Posterior vena cava (tissue), 2 donors: ENCODE measurements at regions of chr7 and their contacts with region 1.

Region 1: DNA sequence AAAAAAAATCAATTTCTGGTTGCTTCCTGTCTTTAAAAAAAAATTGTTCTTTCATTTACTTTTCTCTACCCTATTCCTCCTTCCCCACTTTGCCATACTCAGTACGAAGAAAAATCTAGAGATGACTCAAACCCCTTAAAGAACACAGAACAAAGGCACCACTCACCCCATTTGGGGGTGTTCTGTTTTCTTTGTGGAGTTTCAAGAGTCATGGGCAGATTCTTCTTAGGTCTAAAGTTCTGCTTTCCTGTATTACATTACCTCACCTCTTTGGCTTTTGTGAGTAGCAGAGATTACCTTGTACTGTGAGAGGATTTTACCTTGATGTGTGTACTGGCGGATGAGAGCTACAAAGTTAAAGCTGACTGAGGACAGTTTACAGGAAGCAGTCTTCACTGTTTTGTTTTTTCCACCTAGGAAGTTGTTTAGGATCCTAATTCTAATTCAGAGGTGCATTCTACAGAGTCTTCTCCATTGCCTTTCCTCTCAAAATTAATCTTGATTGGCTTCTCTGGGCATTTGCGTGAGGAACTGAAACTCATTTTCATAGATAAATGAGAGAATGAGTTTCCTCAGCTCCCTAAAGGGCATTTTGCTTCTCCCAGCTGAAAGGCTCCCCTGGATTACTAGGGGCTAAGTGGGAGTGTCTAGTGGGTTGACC is 20.7 kb downstream of the AVL9 start:
- DNase-seq: no peak

Region 2: GRCh38 chr7:31134246-31135188 is 1381.5 kb before region 1 on chr7:
- intact Hi-C with region 1: loop called in 1 of 2 experiments (anchors 5 kb)
- DNase-seq: peak; percentile 83

Region 3: DNA sequence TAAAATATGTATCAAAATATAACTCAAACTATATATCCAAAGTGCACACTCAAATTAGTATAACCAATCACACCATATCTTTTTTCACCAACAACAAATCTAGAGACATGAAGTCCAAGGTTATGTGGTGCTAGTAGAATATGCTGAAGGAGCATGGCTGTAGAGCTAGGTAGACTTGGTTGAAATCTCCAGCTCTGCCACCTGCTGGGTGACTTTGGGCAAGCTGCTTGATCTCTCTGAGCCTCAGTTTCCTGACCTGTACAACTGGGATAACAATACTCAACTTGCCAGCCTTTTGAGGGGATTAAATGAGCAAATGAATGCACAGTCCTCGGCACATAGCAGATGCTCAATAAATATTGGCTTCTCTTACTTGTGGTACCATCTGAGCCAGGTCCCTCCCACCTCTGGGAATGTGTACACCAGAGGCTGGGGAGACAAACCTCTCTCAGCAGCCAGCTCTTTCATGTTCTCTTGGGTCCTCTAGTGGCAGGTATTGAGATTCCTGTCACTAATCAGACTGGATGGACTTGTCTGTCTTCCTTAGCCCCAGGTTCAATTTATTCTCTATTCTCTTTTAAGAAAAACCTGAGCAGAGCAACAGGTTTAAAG is 351.6 kb before region 1 on chr7:
- intact Hi-C with region 1: no loop called
- DNase-seq: no peak

Region 4: DNA sequence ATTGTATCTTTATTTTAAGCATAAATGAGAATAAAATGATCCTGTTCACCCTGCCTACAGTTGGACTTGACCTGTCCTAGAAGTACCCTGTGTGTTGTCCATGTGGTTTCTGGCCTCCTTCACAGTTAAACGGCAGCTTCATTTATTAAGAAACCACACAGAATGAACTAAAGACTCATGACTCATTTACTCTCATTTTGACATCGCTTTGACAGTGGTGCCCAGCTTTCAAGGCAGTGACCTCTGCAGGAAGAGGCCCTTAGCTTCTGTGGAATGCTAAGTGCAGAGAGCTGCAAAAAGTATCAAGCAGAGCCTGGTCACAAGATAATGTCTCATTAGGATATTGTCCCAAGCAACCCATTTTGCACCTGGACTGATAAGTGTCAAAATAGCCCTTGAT is 72.6 kb after region 1 on chr7:
- intact Hi-C with region 1: loop called in 1 of 2 experiments (anchors 5 kb)
- DNase-seq: no peak